Mammary epithelial cell (primary cell): ENCODE measurements at regions of chr3 and their contacts with region 1.

Region 1: GRCh38 chr3:190701096-190701532 is 161.4 kb downstream of the GMNC start:
- DNase-seq: peak; percentile 67
- H3K4me3 ChIP-seq: no peak overlapping the region
- H3K27ac ChIP-seq: no peak overlapping the region
- H3K4me1 ChIP-seq: peaks cover 8% of the 10 kb centered on the region
- H3K27me3 ChIP-seq: no peaks in the 10 kb centered on the region
- CTCF ChIP-seq: peak; percentile 72 to 85

Region 2: DNA sequence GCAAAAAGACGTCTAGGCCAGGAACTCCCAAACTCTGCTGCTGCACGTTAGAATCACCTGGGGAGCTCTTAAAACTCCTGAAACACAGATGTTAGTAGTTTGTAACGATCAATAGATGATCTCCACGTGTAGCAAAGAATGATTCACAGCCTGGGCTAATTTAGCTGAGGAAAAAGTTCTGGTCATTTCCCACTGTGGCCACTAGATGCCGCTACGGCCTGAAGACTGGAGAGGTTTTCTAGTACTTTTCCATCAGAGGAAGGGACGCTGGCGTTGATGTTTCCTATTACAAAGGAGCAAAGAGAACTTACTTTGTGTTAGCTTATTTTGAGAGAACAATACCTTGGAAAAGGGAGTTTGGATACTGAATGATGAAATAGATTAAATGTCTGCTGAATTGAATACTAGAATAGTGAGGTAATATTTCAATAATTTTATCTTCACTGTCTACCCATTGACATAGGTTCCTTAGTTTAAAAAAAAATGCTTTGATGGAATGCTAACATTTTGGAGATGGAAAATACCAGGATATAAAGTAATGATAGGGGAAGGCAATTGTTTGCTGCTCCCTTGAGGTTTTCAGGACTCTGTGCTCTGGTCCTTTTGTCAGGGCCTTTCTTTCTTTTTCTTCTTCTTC is 739.5 kb before region 1 on chr3:
- CTCF ChIA-PET with region 1: no interaction called
- dilution Hi-C with region 1: no loop called
- in situ Hi-C with region 1: no loop called
- intact Hi-C with region 1: loop called (anchors 2 kb)
- DNase-seq: peak; percentile 82
- H3K4me3 ChIP-seq: no peak overlapping the region
- H3K27ac ChIP-seq: peak overlapping the region; percentile 2
- H3K4me1 ChIP-seq: peaks cover 18% of the 10 kb centered on the region
- H3K27me3 ChIP-seq: no peaks in the 10 kb centered on the region
- CTCF ChIP-seq: peak; percentile 90 to 97

Region 3: GRCh38 chr3:190224863-190225692 is 476.0 kb before region 1 on chr3:
- CTCF ChIA-PET with region 1: no interaction called
- dilution Hi-C with region 1: no loop called
- in situ Hi-C with region 1: no loop called
- intact Hi-C with region 1: loop called (anchors 2 kb)
- DNase-seq: peak; percentile 48
- H3K4me3 ChIP-seq: no peak overlapping the region
- H3K27ac ChIP-seq: no peak overlapping the region
- H3K4me1 ChIP-seq: peaks cover 5% of the 10 kb centered on the region
- H3K27me3 ChIP-seq: no peaks in the 10 kb centered on the region
- CTCF ChIP-seq: peak; percentile 53 to 59

Region 4: GRCh38 chr3:190458040-190458439 is 243.1 kb before region 1 on chr3:
- CTCF ChIA-PET with region 1: no interaction called
- dilution Hi-C with region 1: no loop called
- in situ Hi-C with region 1: no loop called
- intact Hi-C with region 1: loop called (anchors 10 kb)
- DNase-seq: peak; percentile 18
- H3K4me3 ChIP-seq: no peak overlapping the region
- H3K27ac ChIP-seq: no peak overlapping the region
- H3K4me1 ChIP-seq: peaks cover 4% of the 10 kb centered on the region
- H3K27me3 ChIP-seq: no peaks in the 10 kb centered on the region
- CTCF ChIP-seq: no peak

Region 5: DNA sequence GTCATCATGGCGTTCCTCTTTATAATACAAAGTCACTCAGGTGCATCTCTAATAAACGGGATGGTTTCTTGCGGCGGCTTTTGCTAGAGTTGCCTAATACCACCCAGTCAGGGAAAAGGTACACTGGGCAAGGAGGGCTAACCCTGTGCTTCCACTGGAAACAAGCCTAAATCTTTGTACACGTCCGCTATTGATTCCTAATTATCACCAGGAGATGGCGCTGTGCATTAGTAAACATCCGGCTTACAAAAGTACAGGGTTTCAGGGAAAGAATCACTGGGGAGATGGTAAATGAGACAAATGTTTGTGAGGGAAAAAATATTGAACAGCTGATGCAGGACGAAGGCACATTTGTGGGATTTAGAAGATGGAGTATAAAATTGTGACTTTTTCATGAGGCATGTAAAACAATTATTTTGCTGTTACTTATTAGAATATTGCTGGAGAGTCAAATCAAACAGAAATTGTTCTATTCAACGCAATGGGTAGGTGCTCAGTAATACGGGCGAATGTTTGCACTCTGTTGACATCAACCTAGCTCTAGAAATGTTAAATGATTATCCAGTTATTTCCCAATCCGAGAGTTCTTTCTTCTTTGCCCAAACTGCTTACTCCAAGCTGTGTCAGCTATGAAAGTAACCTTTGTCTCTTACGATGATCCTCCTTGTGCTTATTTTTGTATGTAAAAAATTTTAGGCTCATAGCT is 110.8 kb after region 1 on chr3:
- CTCF ChIA-PET with region 1: interaction called, 3 read pairs
- dilution Hi-C with region 1: no loop called
- in situ Hi-C with region 1: no loop called
- intact Hi-C with region 1: loop called (anchors 5 kb)
- DNase-seq: peak; percentile 40
- H3K4me3 ChIP-seq: peak overlapping the region; percentile 11 to 52 (median 35)
- H3K27ac ChIP-seq: no peak overlapping the region
- H3K4me1 ChIP-seq: peaks cover 15% of the 10 kb centered on the region
- H3K27me3 ChIP-seq: no peaks in the 10 kb centered on the region
- CTCF ChIP-seq: peak; percentile 74 to 75

Region 6: GRCh38 chr3:191051037-191051436 is 349.9 kb after region 1 on chr3:
- CTCF ChIA-PET with region 1: interaction called, 6 read pairs
- dilution Hi-C with region 1: no loop called
- in situ Hi-C with region 1: loop called in 1 of 2 experiments (anchors 25 kb)
- intact Hi-C with region 1: loop called (anchors 1 kb)
- DNase-seq: peak; percentile 16
- H3K4me3 ChIP-seq: no peak overlapping the region
- H3K27ac ChIP-seq: no peak overlapping the region
- H3K4me1 ChIP-seq: no peaks in the 10 kb centered on the region
- H3K27me3 ChIP-seq: no peaks in the 10 kb centered on the region
- CTCF ChIP-seq: peak; percentile 33 to 39

Region 7: DNA sequence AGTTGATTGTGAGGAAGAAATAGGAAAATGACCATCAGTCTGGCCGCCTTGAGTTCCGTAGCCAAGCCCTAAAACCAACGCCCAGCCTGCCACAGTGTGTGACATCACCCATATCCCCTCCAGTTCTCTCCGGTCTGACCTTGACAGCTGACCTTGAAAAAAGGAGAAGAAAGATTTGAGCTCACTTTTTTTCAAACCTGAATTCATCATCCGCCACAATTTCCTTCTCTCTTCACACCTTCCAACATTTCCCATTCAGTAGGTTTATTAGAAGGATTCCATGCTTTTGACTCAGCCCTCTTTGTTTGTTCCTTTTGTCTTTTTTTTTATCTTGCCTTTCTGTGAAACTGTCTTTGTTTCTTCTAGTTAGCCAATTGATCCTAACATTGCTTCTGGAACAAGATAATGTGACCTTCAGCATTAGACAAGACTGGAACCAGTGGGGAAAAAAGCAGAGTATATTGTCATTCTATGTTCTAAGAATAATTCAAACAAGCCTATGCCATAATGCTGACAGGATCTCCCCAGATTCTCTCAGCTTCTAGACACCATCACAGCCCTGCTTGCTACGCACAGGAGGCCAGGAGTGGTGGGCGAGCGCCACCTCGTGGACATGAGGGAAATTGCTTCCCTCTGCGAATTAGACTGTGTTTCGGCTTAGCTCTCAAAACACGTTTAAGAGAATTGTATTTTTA is 1743.1 kb after region 1 on chr3:
- CTCF ChIA-PET with region 1: no interaction called
- dilution Hi-C with region 1: no loop called
- in situ Hi-C with region 1: no loop called
- intact Hi-C with region 1: loop called (anchors 10 kb)
- DNase-seq: peak; percentile 33
- H3K4me3 ChIP-seq: no peak overlapping the region
- H3K27ac ChIP-seq: no peak overlapping the region
- H3K4me1 ChIP-seq: no peaks in the 10 kb centered on the region
- H3K27me3 ChIP-seq: peaks cover 2% of the 10 kb centered on the region
- CTCF ChIP-seq: peak; percentile 99